Heart left ventricle (tissue), 16 donors: ENCODE measurements at regions of chr15 and their contacts with region 1.

Region 1: DNA sequence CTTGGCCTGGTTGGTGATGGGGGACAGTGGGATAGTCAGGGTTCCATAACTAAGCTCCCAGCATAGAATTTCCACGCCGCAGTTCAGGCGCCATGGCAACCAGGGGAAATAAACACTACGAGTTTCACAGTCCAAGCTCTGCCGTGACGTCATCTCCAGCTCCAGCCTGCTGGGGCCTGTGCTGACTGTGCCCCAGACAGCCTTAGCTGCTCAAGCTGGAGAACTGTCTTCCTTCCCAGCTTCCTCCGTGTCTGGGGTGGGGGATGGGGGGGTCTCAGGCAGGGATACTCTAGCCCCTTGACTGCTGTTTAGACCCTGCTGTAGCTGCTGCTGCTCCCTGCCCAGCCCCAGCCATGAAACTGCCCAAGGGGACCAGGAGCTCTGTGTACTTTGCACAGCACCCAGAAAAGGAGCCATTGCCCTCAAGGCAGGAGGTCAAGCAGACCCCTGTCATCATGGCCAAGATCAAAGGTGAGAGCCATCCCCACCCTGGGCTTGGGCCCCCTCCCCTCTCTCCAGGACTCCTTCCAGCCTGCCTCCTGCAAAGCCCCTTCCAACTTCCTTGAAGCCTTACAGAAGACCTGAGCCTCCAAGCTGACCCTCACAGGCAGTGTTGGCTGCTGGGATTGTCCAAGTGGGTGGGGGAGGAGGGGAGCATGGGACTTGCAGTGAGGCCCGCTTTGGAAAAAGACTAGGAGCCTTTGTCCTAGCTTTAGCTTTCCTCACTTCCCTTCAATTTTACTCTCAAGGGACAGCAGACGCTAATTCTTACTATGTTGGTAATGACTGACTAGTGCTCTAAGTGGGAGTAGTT is 11.4 kb upstream of the CSPG4 start:
- DNase-seq: peak; percentile 88 to 95 (median 91)
- ATAC-seq: peak; percentile 75 to 92 (median 86)
- H3K4me3 ChIP-seq: no peak overlapping the region
- H3K27ac ChIP-seq: peak overlapping the region in 10 of 12 donors; percentile 28 to 85 (median 62)
- H3K4me1 ChIP-seq: peaks cover 0 to 21% (median 11%) of the 10 kb centered on the region in 12 donors
- H3K27me3 ChIP-seq: no peaks in the 10 kb centered on the region
- CTCF ChIP-seq: no peak
- POLR2A ChIP-seq: no peak

Region 2: GRCh38 chr15:75578948-75579920 is 144.8 kb before region 1 on chr15 and contains the start of gene PTPN9:
- intact Hi-C with region 1: no loop called
- DNase-seq: peak; percentile 84 to 91 (median 87)
- ATAC-seq: peak; percentile 75 to 92 (median 90)
- H3K4me3 ChIP-seq: peak within 1 kb of the TSS; percentile 68 to 100 (median 88)
- H3K27ac ChIP-seq: peak within 1 kb of the TSS; percentile 80 to 98 (median 92)
- H3K4me1 ChIP-seq: peaks cover 0 to 29% (median 14%) of the 10 kb centered on the region in 12 donors
- H3K27me3 ChIP-seq: no peaks in the 10 kb centered on the region
- CTCF ChIP-seq: peak; percentile 37 to 72 (median 56)
- POLR2A ChIP-seq: no peak
- total RNA-seq, gene PTPN9: 4.6 to 16.8 (median 8.8) TPM

Region 3: GRCh38 chr15:75694241-75695182 is 29.5 kb before region 1 on chr15:
- intact Hi-C with region 1: loop called in 4 of 10 experiments (anchors 5 kb)
- DNase-seq: peak; percentile 72 to 90 (median 86)
- ATAC-seq: peak; percentile 78 to 92 (median 89)
- H3K4me3 ChIP-seq: peak overlapping the region in 1 of 12 donors; percentile 6
- H3K27ac ChIP-seq: peak overlapping the region in 11 of 12 donors; percentile 26 to 93 (median 67)
- H3K4me1 ChIP-seq: peaks cover 4 to 49% (median 29%) of the 10 kb centered on the region in 12 donors
- H3K27me3 ChIP-seq: peaks cover 0 to 5% (median 0%) of the 10 kb centered on the region in 9 donors
- CTCF ChIP-seq: peak in 9 of 12 donors; percentile 7 to 52 (median 30)
- POLR2A ChIP-seq: no peak

Region 4: DNA sequence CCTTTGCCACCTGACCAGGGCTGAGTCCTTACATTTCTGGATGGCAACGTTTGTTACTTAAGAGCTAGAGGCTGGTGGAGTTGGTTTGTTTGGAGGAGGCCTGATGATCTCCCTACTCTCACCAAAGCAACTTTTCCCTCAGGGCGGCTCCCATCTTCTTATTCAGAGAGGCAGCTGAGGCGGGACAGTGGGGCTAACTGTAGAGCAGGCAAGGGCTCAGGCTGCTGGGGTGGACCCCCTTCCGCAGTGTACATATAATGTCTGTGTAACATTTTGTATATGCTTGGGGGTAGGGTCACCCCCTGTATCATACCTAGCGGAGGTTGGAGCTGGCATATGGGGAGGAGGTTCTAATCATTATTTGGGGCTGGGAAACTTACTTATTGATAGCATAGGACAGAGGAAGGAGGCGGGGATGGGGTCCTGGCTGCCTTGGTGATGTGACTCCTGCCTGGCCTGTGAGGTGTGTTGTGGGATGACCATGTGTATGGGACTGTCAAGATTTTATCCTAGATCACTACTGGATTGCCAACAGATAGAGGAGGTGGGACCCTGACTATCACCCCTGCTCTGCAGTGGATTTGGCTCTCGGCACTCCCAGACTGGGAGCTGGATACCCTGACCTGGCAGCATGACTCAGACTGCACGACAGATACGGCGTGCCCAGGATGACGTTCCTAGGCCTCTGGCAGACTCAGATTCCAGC is 66.7 kb after region 1 on chr15:
- intact Hi-C with region 1: loop called in 1 of 10 experiments (anchors 10 kb)
- DNase-seq: no peak
- ATAC-seq: no peak
- H3K4me3 ChIP-seq: no peak overlapping the region
- H3K27ac ChIP-seq: no peak overlapping the region
- H3K4me1 ChIP-seq: no peaks in the 10 kb centered on the region
- H3K27me3 ChIP-seq: peaks cover 0 to 19% (median 0%) of the 10 kb centered on the region in 9 donors
- CTCF ChIP-seq: no peak
- POLR2A ChIP-seq: no peak

Region 5: DNA sequence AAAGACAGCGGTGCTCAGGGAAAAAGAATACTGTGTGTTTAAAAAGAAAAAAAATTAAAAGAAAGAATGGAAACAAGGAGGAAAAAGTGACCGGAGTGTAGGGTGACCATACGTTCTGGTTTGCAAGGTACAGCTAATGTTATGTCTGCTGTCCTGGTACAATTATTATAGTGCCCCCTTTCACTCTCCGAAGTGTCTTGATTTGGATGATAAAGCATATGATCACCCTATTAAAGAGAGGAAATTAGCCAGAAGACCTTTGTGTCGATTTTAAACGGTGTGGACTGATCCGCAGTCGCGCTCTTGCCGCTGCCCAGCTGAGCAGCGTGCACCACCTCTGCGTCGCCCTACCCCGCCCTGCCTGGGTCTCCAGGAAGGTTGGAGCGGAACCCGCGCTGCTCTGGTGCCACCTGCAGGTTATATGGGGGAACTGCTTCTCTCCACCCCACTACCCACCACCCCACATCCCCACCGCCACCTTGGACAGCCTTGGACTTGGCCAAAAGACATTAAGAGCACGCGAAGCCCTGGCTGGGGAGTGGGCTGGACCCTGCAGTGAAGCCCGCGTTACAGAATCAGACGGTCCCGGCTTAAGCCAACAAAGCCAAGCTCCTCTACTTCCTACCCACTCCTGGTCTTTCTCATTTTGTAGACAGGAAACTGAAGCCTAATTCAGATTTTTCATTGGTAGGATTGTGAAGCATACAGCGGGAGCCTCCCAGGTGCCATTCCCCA is 78.0 kb after region 1 on chr15:
- intact Hi-C with region 1: loop called in 6 of 10 experiments (anchors 1 to 10 kb)
- DNase-seq: peak; percentile 78 to 92 (median 84)
- ATAC-seq: peak; percentile 93 to 99 (median 98)
- H3K4me3 ChIP-seq: peak overlapping the region in 8 of 12 donors; percentile 11 to 40 (median 29)
- H3K27ac ChIP-seq: no peak overlapping the region
- H3K4me1 ChIP-seq: peaks cover 0 to 16% (median 4%) of the 10 kb centered on the region in 12 donors
- H3K27me3 ChIP-seq: peaks cover 0 to 27% (median 0%) of the 10 kb centered on the region in 9 donors
- CTCF ChIP-seq: peak; percentile 79 to 98 (median 92)
- POLR2A ChIP-seq: no peak

Region 6: GRCh38 chr15:75921729-75922703 is 198.0 kb after region 1 on chr15:
- intact Hi-C with region 1: loop called in 1 of 10 experiments (anchors 10 kb)
- DNase-seq: peak in 3 of 5 donors; percentile 10 to 34 (median 34)
- ATAC-seq: peak; percentile 66 to 78 (median 70)
- H3K4me3 ChIP-seq: no peak overlapping the region
- H3K27ac ChIP-seq: no peak overlapping the region
- H3K4me1 ChIP-seq: peaks cover 0 to 40% (median 12%) of the 10 kb centered on the region in 12 donors
- H3K27me3 ChIP-seq: no peaks in the 10 kb centered on the region
- CTCF ChIP-seq: peak in 10 of 12 donors; percentile 18 to 60 (median 44)
- POLR2A ChIP-seq: no peak